ENCODE measurements at regions of chr1 and their contacts with region 1.

Region 1: GRCh38 chr1:248914796-248915381 is 8.9 kb downstream of the PGBD2 start:
- DNase-seq: no peak
- ATAC-seq: no peak
- H3K4me3 ChIP-seq: no peak overlapping the region
- H3K27ac ChIP-seq: no peak overlapping the region
- H3K4me1 ChIP-seq: no peaks in the 10 kb centered on the region
- CTCF ChIP-seq: no peak
- EP300 ChIP-seq: no peak
- POLR2A ChIP-seq: no peak
- RAD21 ChIP-seq: no peak

Region 2: DNA sequence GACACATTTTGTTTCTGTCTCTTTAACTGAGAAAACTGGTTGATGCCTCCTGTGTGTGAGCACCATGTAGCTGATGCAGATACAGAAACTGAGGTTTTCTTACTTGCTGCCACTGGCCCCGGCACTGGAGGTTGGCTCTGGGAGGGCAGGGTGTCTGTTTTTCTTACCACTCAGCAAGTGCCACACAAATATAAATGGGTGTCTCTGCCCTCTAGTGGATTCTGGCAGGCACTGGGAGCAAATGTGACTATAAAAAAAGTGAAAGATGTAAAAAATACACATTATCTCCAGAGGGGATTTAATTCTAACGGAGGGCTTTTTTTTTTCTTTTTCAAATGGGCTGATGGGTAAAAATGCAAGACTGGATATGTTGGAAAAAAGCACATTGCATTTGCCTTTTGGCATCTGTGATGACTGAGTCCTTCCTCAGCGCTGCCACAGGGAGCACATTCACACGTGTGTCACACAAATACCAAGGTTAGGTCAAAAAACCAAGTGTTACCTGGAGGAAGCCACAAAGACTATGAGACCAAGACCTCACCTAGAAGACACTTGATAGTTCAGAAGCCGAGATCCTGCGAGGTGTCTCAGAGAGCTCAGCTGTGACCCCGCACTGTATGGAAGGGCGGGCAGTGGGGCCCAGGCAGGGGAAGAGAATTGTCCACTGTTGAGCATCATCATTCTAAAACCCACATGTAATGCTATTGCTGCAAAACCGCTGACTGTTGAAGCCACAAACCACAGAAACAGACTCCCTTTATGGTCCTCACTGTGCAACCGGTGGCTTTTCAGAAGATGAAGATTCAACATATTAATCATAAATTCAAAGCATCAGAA is 10.0 kb after region 1 on chr1:
- CTCF ChIA-PET with region 1: interaction called, 11 read pairs
- POLR2A ChIA-PET with region 1: no interaction called
- DNase-seq: peak; percentile 54 to 75
- ATAC-seq: peak; percentile 96 to 98
- H3K4me3 ChIP-seq: no peak overlapping the region
- H3K27ac ChIP-seq: no peak overlapping the region
- H3K4me1 ChIP-seq: no peaks in the 10 kb centered on the region
- CTCF ChIP-seq: peak; percentile 70
- EP300 ChIP-seq: no peak
- POLR2A ChIP-seq: no peak
- RAD21 ChIP-seq: peak; percentile 63 to 71

Measured in A549 (cell line).